ENCODE measurements at regions of chr18 and their contacts with region 1.

Region 1: DNA sequence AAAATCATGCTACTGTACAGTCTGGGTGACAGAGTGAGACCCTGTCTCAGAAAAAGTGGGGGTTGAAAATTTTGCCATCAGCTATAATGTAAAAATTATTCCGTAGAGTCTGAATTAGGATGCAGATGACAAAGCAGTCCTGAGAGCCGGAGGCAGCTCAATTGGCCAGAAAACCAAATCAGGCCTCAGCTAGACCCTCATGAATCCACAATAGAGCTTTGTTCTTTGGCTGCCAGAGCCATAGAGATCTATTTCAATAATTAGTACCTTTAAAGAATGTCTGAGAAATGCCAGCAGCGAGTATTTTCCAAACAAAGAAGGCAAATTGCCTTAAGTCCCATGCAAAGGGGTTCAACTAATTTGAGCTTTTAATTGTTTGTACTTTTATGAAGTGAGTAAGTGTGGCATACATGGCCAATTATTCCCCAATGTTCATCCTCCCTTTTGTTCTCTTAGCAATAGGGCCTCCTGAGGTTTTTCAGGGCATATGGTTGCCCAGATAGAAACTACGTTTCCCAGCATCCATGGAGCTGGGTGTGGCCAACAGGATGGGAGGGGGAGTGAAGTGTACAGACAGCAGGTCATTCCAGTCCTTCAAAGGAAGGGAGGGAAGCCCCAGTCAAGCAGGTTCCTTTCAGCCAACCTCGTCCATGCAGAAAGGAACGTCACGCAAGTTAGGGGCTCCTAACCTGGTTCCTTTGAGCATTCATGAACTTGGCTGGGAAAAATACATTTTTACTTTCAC is 211.3 kb upstream of the APCDD1 start:
- DNase-seq: no peak
- H3K4me3 ChIP-seq: no peak overlapping the region
- CTCF ChIP-seq: no peak

Region 2: GRCh38 chr18:10304853-10305252 is 61.7 kb after region 1 on chr18:
- in situ Hi-C with region 1: loop called (anchors 5 kb)
- DNase-seq: peak; percentile 71
- H3K4me3 ChIP-seq: no peak overlapping the region
- CTCF ChIP-seq: no peak

Region 3: GRCh38 chr18:10320791-10321190 is 77.7 kb after region 1 on chr18:
- in situ Hi-C with region 1: no loop called
- DNase-seq: peak; percentile 33
- H3K4me3 ChIP-seq: no peak overlapping the region
- CTCF ChIP-seq: no peak